ENCODE measurements at regions of chr9 and their contacts with region 1.

Region 1: DNA sequence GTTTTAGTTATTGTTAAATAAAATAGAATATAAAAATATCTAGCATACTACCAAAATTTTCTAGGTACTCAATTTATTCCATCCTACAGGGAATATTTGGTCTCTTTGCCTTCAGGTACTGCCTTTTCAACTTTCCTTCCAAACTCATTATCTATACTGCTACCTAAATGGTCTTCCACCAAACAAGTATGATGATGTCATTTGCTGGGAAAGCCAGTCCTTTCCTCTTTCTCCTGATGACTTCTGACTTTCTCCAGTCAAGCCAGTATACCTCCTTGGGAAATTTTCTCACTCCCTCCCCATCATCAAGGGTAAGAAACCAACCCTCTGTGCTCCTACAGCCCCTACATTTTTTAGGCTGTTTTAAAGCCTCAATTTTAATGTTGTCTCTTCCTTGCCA is 100.2 kb downstream of the PAPPA start:
- DNase-seq: no peak
- H3K4me3 ChIP-seq: no peak overlapping the region
- H3K27ac ChIP-seq: no peak overlapping the region
- H3K27me3 ChIP-seq: no peaks in the 10 kb centered on the region
- CTCF ChIP-seq: no peak

Region 2: DNA sequence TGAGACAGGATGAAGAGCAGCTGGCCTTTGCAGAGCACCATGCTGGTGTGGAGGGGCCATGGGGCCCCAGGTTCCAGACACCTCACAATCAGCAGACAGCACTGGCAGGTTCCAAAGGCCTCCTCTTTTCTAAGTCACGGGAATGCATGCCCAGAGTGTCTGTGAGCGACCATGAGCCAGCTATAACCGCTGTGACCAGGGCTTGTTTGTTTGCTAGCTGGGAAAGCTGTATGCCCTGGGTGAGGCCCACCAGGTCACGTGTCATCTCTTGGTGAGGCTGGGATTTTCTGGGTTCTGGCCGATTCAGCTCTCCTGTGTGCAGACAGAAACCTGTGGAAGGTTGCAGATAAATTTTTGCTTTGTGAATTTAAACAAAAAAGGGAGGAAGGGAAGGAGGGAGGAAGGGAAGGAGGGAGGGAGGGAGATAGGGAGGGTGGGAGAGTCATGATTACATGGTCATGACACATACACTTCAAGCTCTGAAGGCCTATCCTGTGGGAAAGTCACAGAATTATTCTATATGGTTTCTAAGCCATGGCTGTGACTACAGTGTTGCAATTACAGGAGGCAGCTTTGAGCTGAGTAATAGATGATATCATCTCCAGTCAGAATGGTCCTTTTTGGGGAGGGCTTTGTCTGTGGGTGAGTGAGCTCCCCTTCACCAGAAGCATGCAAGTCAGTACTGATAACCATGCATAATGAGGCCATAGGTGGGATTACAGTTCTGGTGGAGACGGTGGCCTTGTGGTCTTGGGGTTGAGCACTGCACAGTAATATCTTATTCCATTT is 63.0 kb before region 1 on chr9:
- CTCF ChIA-PET with region 1: no interaction called
- POLR2A ChIA-PET with region 1: interaction called, 11 read pairs
- DNase-seq: peak; percentile 36
- H3K4me3 ChIP-seq: no peak overlapping the region
- H3K27ac ChIP-seq: peak overlapping the region; percentile 58
- H3K27me3 ChIP-seq: no peaks in the 10 kb centered on the region
- CTCF ChIP-seq: no peak

Region 3: DNA sequence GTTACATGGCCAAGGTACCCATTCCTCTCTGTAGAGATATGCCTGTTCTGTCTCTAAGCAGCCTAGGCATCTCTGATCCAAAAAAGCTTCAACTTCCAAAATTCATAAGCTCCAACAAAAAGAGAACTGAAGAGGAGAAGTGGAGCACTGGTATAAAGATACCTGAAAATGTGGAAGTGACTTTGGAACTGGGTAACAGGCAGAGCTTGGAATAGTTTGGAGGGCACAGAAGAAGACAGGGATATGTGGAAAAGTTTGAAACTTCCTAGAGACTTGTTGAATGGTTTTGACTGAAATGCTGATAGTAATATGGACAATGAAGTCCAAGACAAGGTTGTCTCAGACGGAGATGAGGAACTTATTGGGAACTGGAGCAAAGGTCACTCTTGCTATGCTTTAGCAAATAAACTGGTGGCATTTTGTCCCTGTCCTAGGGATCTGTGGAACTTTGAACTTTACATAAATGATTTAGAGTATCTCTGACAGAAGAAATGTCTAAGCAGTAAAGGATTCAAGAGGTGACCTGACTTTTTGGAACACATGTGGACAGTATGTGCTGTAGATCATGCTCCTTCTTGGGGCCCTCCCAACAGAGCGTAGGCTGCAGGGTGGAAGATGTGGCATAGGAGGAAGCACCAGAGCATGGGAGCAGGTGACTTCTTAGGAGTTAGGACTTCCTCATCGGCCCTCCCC is 271.1 kb after region 1 on chr9:
- CTCF ChIA-PET with region 1: no interaction called
- POLR2A ChIA-PET with region 1: no interaction called
- DNase-seq: no peak
- H3K4me3 ChIP-seq: no peak overlapping the region
- H3K27ac ChIP-seq: no peak overlapping the region
- H3K27me3 ChIP-seq: no peaks in the 10 kb centered on the region
- CTCF ChIP-seq: no peak